Activated CD4-positive, alpha-beta T cell treated with anti-CD3 and anti-CD28 coated beads, Interleukin-2, amount 10 ng/mL, durations not matched to agents 7 days and 5 days (primary cell): ENCODE measurements at regions of chr18 and their contacts with region 1.

Region 1: GRCh38 chr18:63578357-63578958 is 8.7 kb upstream of the SERPINB13 start:
- DNase-seq: peak; percentile 39
- H3K4me3 Mint-ChIP-seq: no peak overlapping the region
- H3K27ac Mint-ChIP-seq: no peak overlapping the region
- H3K4me1 Mint-ChIP-seq: no peaks in the 10 kb centered on the region
- H3K27me3 Mint-ChIP-seq: peaks cover 30% of the 10 kb centered on the region

Region 2: GRCh38 chr18:63518178-63519012 is 60.1 kb before region 1 on chr18:
- CTCF ChIA-PET with region 1: interaction called, 18 read pairs
- POLR2A ChIA-PET with region 1: no interaction called
- DNase-seq: peak; percentile 75
- H3K4me3 Mint-ChIP-seq: no peak overlapping the region
- H3K27ac Mint-ChIP-seq: no peak overlapping the region
- H3K4me1 Mint-ChIP-seq: no peaks in the 10 kb centered on the region
- H3K27me3 Mint-ChIP-seq: peaks cover 26% of the 10 kb centered on the region

Region 3: DNA sequence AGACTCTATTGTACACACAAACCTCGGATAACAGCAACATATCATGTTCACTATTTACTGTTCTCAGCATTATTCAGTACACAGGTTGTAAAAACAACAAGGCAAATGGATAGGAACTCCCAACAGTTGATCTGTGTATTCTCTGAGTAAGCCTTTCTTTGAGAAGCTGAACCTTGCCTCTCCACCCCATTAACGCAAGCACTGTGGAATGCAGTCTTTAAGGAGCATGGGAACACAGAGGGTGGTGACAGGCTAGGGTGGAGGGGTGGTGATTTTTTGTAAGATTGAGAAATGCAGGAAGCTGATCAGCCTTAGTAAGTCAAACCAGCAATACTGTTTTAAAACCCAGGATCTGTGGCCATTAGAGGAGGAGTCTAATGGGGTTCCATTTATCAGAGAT is 104.7 kb after region 1 on chr18:
- CTCF ChIA-PET with region 1: no interaction called
- POLR2A ChIA-PET with region 1: no interaction called
- DNase-seq: no peak
- H3K4me3 Mint-ChIP-seq: no peak overlapping the region
- H3K27ac Mint-ChIP-seq: no peak overlapping the region
- H3K4me1 Mint-ChIP-seq: no peaks in the 10 kb centered on the region
- H3K27me3 Mint-ChIP-seq: no peaks in the 10 kb centered on the region